AG04450 (cell line): ENCODE measurements at regions of chr10 and their contacts with region 1.

Region 1: GRCh38 chr10:49407552-49408137 is 11.8 kb upstream of the DRGX start:
- DNase-seq: peak; percentile 21
- H3K4me3 ChIP-seq: no peak overlapping the region
- H3K27ac ChIP-seq: no peak overlapping the region
- H3K27me3 ChIP-seq: peaks cover 20% of the 10 kb centered on the region
- CTCF ChIP-seq: peak; percentile 94

Region 2: GRCh38 chr10:49419005-49419404 is 11.4 kb after region 1 on chr10:
- CTCF ChIA-PET with region 1: interaction called, 17 read pairs
- POLR2A ChIA-PET with region 1: no interaction called
- DNase-seq: no peak
- H3K4me3 ChIP-seq: no peak overlapping the region
- H3K27ac ChIP-seq: no peak overlapping the region
- H3K27me3 ChIP-seq: peaks cover 8% of the 10 kb centered on the region
- CTCF ChIP-seq: no peak

Region 3: DNA sequence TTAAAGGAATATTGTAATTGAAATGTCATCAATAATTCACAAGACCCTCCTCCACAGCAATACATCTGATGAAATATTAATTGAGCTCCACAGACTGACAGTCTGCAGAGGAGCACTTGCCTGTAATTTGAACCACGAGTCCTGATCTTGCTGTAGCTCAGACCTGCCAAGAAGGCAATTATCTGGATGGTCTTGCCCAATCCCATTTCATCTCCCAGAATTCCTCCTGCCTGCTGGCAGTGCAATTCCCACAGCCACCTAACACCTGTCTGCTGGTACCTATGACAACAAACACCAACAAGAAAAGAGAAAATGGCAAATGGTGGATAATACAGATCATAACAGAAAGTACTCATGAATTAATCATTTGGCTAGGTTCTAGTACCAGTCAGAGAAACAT is 92.8 kb after region 1 on chr10:
- CTCF ChIA-PET with region 1: interaction called, 11 read pairs
- POLR2A ChIA-PET with region 1: no interaction called
- DNase-seq: no peak
- H3K4me3 ChIP-seq: no peak overlapping the region
- H3K27ac ChIP-seq: no peak overlapping the region
- H3K27me3 ChIP-seq: no peaks in the 10 kb centered on the region
- CTCF ChIP-seq: no peak

Region 4: DNA sequence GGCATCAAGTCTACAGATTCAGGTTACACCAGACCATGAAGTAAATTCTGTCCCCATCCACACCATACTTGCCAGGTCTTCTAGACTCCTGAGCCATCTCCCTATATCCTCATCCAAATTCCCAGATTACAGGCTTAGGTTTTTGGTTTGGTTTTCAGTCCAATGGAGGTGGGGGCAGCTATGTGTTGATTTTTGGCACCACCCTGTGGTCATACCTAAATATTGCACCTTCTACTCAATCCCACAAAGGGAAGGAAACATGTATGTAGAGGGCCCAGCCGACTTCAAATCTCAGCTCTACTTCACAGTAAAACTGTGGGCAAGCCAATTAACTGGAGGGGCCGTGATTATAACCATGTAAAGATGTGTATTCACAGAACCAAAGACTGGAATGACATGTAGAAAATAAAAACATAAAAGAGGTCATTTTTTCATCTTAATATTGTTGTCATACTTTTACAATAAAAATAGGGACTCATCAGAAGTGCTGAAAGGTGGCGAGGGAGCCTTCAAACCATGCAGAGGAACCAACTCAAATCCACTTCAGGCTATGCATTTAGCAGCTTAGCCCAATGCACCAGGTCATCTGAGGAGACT is 111.4 kb after region 1 on chr10:
- CTCF ChIA-PET with region 1: interaction called, 229 read pairs
- POLR2A ChIA-PET with region 1: no interaction called
- DNase-seq: no peak
- H3K4me3 ChIP-seq: no peak overlapping the region
- H3K27ac ChIP-seq: no peak overlapping the region
- H3K27me3 ChIP-seq: no peaks in the 10 kb centered on the region
- CTCF ChIP-seq: peak; percentile 73

Region 5: GRCh38 chr10:49733866-49734265 is 326.2 kb after region 1 on chr10:
- CTCF ChIA-PET with region 1: no interaction called
- POLR2A ChIA-PET with region 1: no interaction called
- DNase-seq: no peak
- H3K4me3 ChIP-seq: no peak overlapping the region
- H3K27ac ChIP-seq: no peak overlapping the region
- H3K27me3 ChIP-seq: peaks cover 2% of the 10 kb centered on the region
- CTCF ChIP-seq: no peak